Activated B cell treated with CpG ODN at 0.5 μM for 24 hours (primary cell): ENCODE measurements at regions of chr2 and their contacts with region 1.

Region 1: GRCh38 chr2:161090411-161090810 is 69.8 kb upstream of the TANK start:
- DNase-seq: no peak
- ATAC-seq: no peak
- H3K4me3 Mint-ChIP-seq: peak overlapping the region; percentile 76
- H3K27ac Mint-ChIP-seq: peak overlapping the region; percentile 83
- H3K4me1 Mint-ChIP-seq: peaks cover 48% of the 10 kb centered on the region
- H3K27me3 Mint-ChIP-seq: no peaks in the 10 kb centered on the region
- CTCF ChIP-seq: no peak

Region 2: DNA sequence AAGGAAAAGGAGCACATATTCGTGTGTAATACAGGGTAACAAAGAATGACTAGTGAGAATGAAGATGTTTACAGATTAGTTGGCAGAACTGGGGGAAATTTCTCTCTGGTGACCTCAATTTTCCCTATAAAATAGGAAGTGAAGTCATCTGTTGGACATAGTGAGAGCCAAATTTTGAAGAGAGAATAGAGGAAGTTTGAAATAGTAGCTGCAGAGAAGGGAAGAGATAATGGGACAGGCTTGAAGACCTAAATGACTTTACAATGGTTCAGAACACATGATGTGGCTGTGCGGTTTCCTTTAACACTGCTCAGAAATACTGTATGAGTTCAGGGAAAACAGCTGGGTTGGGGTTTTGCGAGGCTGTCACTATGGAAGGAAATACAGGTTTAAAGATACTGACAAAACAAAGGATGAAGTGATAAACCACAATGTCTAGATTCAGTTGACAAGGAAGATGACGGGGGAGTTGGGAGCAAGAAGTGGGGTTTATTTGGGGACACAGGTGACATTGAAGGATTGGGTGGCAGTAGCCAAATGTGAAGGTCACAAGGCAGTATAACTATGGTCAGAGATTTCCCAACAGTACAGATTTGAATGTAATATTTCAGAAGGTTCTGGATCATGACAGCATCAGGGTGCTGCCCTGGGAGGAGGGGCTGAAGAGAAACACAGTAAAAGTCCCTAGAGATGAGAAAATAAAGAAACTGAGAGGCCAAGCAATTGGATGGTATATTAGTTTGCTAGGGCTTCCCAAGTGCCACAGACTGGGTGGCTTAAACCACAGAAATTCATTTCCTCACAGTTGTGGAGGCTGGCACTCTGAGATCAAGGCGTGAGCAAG is 12.8 kb before region 1 on chr2:
- CTCF ChIA-PET with region 1: no interaction called
- POLR2A ChIA-PET with region 1: interaction called, 4 read pairs
- intact Hi-C with region 1: loop called (anchors 1 kb)
- DNase-seq: no peak
- ATAC-seq: peak; percentile 87
- H3K4me3 Mint-ChIP-seq: peak overlapping the region; percentile 60
- H3K27ac Mint-ChIP-seq: peak overlapping the region; percentile 80
- H3K4me1 Mint-ChIP-seq: peaks cover 27% of the 10 kb centered on the region
- H3K27me3 Mint-ChIP-seq: no peaks in the 10 kb centered on the region
- CTCF ChIP-seq: no peak

Region 3: DNA sequence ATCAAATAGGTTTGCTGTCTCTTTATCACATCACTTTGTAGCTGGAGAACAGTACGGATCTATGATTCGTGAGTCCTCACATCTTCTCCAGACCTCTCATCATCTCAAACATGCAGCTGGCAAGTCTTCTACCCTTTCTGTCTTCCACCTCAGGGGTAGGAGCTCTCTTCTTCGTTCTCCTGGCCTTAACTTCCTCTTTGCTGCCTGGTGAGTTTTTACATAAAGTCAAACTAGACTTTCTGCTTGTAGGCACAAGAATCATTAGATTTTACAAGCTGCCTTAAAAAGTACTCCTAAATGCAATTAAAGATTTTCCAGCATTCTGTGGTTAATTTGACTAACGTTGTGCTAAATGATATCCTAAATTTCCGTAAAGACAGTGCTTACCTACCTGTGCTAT is 26.1 kb after region 1 on chr2:
- CTCF ChIA-PET with region 1: interaction called, 3 read pairs
- POLR2A ChIA-PET with region 1: interaction called, 3 read pairs
- intact Hi-C with region 1: loop called (anchors 1 kb)
- DNase-seq: no peak
- ATAC-seq: peak; percentile 42
- H3K4me3 Mint-ChIP-seq: no peak overlapping the region
- H3K27ac Mint-ChIP-seq: peak overlapping the region; percentile 51
- H3K4me1 Mint-ChIP-seq: peaks cover 29% of the 10 kb centered on the region
- H3K27me3 Mint-ChIP-seq: no peaks in the 10 kb centered on the region
- CTCF ChIP-seq: no peak